PC-9 (cell line): ENCODE measurements at regions of chr4 and their contacts with region 1.

Region 1: DNA sequence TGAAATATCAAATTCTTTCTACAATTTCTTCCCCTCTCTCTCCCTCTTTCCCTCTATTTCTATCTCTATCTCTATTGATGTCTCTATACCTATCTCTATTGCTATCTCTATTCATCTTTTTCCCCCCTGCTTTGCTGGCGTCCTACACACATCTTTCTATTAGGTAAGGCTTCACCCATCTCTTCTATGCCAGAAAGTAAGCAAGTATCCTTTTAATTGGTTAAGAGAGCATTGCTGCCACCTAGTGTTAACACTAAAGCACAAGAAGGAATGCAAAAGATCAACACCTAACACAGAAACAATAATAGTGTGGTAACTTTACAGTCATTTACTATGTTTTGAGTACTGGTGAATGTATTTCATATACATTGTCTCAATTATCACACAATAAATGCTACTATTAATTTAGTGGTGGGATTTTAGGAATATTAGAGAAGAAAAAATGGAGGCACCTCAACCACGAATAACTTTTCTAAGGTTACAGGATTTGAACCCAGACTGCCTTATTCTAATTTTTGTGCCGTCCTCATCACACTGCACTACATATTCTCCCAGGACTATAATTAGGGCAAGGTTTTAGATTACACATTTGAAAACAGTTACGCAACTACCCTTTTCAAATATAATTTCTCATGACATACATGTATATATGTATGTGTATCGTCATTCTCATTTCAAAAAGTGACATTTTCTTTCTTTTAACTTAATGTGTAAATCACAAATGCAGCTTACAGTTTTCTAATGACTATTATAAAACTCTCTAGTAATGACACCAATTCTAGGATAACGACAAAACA is 3.7 kb upstream of the C4orf36 start:
- DNase-seq: peak in 1 of 2 experiments; percentile 50
- H3K4me3 ChIP-seq: no peak overlapping the region
- H3K27ac ChIP-seq: no peak overlapping the region
- H3K4me1 ChIP-seq: peaks cover 2% of the 10 kb centered on the region; the same call in 1 of the 2 replicates
- H3K27me3 ChIP-seq: no peaks in the 10 kb centered on the region
- CTCF ChIP-seq: peak; percentile 80

Region 2: GRCh38 chr4:86452947-86453531 is 442.9 kb before region 1 on chr4:
- CTCF ChIA-PET with region 1: no interaction called
- POLR2A ChIA-PET with region 1: interaction called, 3 read pairs
- intact Hi-C with region 1: loop called (anchors 1 kb)
- DNase-seq: peak; percentile 62 to 73
- H3K4me3 ChIP-seq: peak overlapping the region; percentile 42; the same call in 1 of the 2 replicates
- H3K27ac ChIP-seq: peak overlapping the region; percentile 78
- H3K4me1 ChIP-seq: peaks cover 42% of the 10 kb centered on the region
- H3K27me3 ChIP-seq: no peaks in the 10 kb centered on the region
- CTCF ChIP-seq: no peak

Region 3: GRCh38 chr4:86522349-86522748 is 373.5 kb before region 1 on chr4:
- CTCF ChIA-PET with region 1: no interaction called
- POLR2A ChIA-PET with region 1: no interaction called
- intact Hi-C with region 1: loop called (anchors 1 kb)
- DNase-seq: no peak
- H3K4me3 ChIP-seq: no peak overlapping the region
- H3K27ac ChIP-seq: no peak overlapping the region
- H3K4me1 ChIP-seq: no peaks in the 10 kb centered on the region
- H3K27me3 ChIP-seq: no peaks in the 10 kb centered on the region
- CTCF ChIP-seq: peak; percentile 44; the same call in 1 of the 2 replicates

Region 4: GRCh38 chr4:86653237-86653865 is 242.5 kb before region 1 on chr4:
- CTCF ChIA-PET with region 1: no interaction called
- POLR2A ChIA-PET with region 1: no interaction called
- intact Hi-C with region 1: loop called (anchors 5 kb)
- DNase-seq: peak in 1 of 2 experiments; percentile 9
- H3K4me3 ChIP-seq: no peak overlapping the region
- H3K27ac ChIP-seq: no peak overlapping the region
- H3K4me1 ChIP-seq: no peaks in the 10 kb centered on the region
- H3K27me3 ChIP-seq: no peaks in the 10 kb centered on the region
- CTCF ChIP-seq: peak; percentile 76

Region 5: DNA sequence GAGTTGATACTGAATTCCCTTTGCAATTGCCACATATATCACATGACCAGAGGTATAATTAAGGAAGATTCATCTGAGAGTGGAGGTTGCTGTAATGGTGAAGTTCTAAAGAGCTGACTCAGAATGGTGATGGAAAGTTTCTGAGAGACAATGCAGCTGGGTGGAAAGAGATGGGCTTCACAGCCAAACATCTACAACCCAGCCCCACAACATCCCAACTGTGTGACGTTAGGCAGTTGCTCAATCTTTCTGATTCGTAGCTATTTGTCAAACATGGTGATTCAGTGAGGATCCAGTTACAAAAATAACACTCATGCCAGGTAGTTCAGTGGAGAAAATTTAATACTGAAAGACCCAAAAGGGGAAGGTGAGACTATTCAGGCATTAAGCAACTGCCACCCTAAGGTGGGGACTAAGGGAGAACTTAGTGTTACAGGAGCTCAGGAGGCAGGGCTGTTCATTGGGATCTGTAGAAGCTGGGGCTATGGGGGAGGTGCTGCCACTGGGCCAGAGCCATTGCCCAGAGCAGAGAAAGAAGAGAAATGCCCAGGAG is 32.0 kb after region 1 on chr4:
- CTCF ChIA-PET with region 1: no interaction called
- POLR2A ChIA-PET with region 1: interaction called, 10 read pairs
- intact Hi-C with region 1: no loop called
- DNase-seq: peak; percentile 65 to 90
- H3K4me3 ChIP-seq: no peak overlapping the region
- H3K27ac ChIP-seq: peak overlapping the region; percentile 83
- H3K4me1 ChIP-seq: peaks cover 32% of the 10 kb centered on the region
- H3K27me3 ChIP-seq: no peaks in the 10 kb centered on the region
- CTCF ChIP-seq: no peak

Region 6: DNA sequence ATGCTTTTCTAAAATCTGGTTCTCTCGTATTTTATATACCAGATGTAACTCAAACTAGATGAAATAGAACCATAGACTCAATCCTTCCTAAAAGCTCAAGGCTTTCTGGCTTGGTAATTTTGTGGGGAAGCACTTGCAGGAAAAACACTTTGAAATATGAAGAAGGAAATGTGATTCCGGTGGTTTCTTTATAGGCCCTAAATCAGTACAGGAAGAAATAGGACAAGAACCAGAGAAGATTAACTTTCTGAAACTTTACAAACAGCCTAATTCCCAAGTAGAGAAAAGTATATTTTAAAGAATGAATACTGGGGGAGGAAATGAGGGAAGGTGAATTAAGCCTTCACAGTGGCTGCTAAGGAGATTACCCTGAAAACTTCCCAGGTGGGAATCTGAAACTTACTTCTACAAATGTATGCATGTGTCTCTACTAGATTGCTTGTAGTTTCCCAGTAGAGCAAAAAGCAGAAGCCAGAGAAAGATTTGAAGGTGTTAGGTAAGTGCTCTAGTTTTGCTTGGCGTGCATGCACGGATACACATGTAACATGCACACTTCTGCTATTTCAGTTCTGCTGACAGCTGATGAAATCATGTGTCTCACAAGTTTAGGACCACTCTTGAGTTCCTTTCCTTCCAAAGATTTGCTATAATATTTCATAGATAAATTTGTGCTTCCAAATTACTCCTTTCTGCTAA is 131.1 kb after region 1 on chr4:
- CTCF ChIA-PET with region 1: no interaction called
- POLR2A ChIA-PET with region 1: no interaction called
- intact Hi-C with region 1: no loop called
- DNase-seq: no peak
- H3K4me3 ChIP-seq: no peak overlapping the region
- H3K27ac ChIP-seq: no peak overlapping the region
- H3K4me1 ChIP-seq: no peaks in the 10 kb centered on the region
- H3K27me3 ChIP-seq: no peaks in the 10 kb centered on the region
- CTCF ChIP-seq: no peak